HepG2 (cell line): ENCODE measurements at regions of chr13 and their contacts with region 1.

Region 1: DNA sequence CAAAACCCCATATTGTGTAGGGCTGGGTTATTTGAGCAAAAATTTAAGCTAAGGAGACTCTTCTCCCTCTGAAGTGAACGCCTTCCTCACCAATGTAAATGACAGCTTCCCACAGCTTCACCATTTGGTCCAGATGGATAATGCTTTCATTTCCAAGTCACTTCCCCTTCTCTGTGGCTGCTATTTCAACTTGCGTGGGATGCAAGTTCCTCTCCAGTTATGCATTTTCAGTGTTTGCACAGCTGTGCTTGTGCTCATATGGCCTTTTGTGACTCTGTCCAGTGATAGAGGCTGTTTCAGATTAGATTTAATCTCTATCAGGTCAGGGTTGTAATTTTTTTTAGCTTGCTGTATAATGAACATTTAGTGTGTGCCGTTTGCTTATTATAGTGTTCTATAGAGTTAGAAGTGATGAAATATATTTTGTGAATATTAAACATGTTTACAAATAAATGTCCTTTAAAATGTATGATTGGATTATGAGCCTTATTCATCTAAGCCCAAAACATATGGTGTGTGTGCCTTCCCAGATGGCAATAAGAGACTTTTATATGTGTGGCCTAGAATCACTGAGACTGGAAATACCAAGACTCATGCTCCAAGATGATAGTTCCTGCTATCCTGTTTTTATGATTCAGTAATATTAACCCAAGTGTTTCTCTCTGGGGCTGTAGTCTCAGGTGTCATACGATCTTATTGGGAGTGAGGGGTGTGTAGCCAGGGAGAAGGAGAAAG is 86.6 kb downstream of the TNFRSF19 start:
- DNase-seq: peak; percentile 45
- ATAC-seq: no peak
- H3K4me3 ChIP-seq: no peak overlapping the region
- H3K27ac ChIP-seq: no peak overlapping the region
- H3K4me1 ChIP-seq: peaks cover 67% of the 10 kb centered on the region
- H3K27me3 ChIP-seq: no peaks in the 10 kb centered on the region
- CTCF ChIP-seq: no peak
- EP300 ChIP-seq: no peak
- POLR2A ChIP-seq: no peak
- RAD21 ChIP-seq: no peak

Region 2: GRCh38 chr13:23129331-23129730 is 527.5 kb before region 1 on chr13:
- CTCF ChIA-PET with region 1: no interaction called
- POLR2A ChIA-PET with region 1: no interaction called
- in situ Hi-C with region 1: no loop called
- intact Hi-C with region 1: no loop called
- DNase-seq: no peak
- ATAC-seq: no peak
- H3K4me3 ChIP-seq: no peak overlapping the region
- H3K27ac ChIP-seq: no peak overlapping the region
- H3K4me1 ChIP-seq: no peaks in the 10 kb centered on the region
- H3K27me3 ChIP-seq: no peaks in the 10 kb centered on the region
- CTCF ChIP-seq: no peak
- EP300 ChIP-seq: no peak
- POLR2A ChIP-seq: no peak
- RAD21 ChIP-seq: no peak

Region 3: DNA sequence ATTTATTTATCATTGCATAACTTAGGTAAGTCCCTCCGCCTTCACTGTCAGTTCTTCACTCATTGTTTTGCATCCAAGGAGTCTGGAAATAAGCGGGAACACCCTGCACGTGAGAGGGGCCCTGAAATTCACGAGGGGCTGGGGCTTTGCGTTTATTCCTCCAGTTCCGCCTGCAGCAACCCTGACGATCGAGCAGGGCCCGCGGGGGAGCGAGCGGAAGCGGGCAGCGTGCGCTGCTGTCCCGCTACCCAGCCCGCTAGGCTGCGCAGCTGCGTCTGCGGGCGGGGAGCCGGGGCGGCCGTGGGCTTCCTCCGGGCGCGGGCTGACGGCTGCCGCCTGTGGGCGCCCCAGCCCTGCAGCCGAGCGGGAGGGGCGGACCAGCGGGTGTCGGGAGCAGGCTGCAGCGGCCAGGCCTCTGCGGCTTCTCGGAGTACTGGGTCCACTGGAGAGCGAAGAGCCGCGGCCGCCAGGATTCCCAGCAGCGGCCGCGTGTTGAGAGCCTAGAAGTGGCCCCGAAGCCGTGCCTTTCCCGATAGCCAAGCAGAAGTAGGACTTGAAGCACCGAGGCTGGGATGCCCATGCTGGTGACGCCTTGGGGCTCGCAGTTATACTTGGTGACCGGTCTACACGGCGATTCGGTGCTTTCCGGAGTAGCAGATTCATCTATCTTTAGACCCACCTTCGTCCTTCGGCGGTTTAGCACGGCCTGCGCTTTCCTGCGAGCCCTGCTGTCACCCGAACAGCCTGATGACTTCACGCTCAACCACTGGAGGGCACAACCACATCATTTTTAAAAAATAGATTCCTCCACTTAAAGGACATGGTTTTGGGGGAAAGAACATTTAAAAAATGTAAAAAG is 190.4 kb before region 1 on chr13:
- CTCF ChIA-PET with region 1: no interaction called
- POLR2A ChIA-PET with region 1: no interaction called
- in situ Hi-C with region 1: no loop called
- intact Hi-C with region 1: loop called (anchors 10 kb)
- DNase-seq: peak; percentile 54
- ATAC-seq: peak; percentile 97
- H3K4me3 ChIP-seq: peak overlapping the region; percentile 40 to 79 (median 50)
- H3K27ac ChIP-seq: no peak overlapping the region
- H3K4me1 ChIP-seq: peaks cover 25% of the 10 kb centered on the region
- H3K27me3 ChIP-seq: peaks cover 0 to 5% of the 10 kb centered on the region in 2 experiments; a peak in 2 of 5 replicates
- CTCF ChIP-seq: peak; percentile 68
- EP300 ChIP-seq: no peak
- POLR2A ChIP-seq: no peak
- RAD21 ChIP-seq: peak; percentile 65

Region 4: DNA sequence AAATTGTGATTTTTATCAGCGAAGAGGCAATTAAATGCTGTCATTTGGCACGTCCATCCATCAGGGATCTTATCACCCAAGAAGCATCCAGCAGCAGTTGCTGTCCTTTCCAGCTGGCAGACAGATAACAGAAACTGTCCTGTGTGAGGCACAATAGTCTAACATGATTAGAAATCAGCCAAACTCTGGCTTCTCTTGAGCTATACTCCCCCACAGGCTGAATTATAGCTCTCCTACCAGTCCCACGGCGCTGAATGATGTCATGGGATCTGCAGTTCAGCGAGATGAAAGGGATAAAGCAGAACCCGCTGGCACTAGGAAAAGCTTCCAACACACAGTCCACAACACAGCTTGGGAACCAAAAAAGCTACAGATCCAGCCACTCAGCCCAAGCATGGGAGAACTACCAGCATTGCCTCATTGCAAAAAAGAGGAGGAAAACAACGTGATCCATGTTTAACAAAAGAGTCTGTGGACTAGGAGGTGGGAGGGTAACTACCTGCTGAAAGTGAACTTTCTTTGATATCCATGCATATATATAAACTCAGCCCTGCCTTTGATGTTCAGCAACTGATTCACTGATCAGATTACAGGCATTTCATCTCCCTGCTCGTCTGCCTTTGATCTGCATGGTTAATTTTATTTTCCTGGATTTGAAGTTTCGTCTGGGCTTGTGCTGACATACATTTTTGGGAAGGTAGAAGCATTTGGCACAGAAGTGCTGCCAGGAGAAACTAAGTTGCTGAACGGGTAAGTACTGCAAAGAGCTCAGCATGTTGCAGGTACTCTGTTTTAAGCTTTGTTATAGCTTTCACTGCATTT is 86.5 kb before region 1 on chr13 and contains the start of gene TNFRSF19:
- CTCF ChIA-PET with region 1: no interaction called
- POLR2A ChIA-PET with region 1: interaction called, 17 read pairs
- in situ Hi-C with region 1: no loop called
- intact Hi-C with region 1: no loop called
- DNase-seq: peak; percentile 98
- ATAC-seq: peak; percentile 88
- H3K4me3 ChIP-seq: peak within 1 kb of the TSS; percentile 58 to 94 (median 66)
- H3K27ac ChIP-seq: peak within 1 kb of the TSS; percentile 84
- H3K4me1 ChIP-seq: peaks cover 64% of the 10 kb centered on the region
- H3K27me3 ChIP-seq: no peaks in the 10 kb centered on the region
- CTCF ChIP-seq: 0 out of 2 replicates have a peak, but pooled peaks have one; percentile 13
- EP300 ChIP-seq: peak; percentile 67 to 87; a peak in 3 of 4 replicates
- POLR2A ChIP-seq: peak in 1 of 2 experiments; percentile 63; a peak in 2 of 4 replicates
- RAD21 ChIP-seq: no peak
- total RNA-seq, gene TNFRSF19: 47.7 and 77.7 TPM in 2 replicates

Region 5: DNA sequence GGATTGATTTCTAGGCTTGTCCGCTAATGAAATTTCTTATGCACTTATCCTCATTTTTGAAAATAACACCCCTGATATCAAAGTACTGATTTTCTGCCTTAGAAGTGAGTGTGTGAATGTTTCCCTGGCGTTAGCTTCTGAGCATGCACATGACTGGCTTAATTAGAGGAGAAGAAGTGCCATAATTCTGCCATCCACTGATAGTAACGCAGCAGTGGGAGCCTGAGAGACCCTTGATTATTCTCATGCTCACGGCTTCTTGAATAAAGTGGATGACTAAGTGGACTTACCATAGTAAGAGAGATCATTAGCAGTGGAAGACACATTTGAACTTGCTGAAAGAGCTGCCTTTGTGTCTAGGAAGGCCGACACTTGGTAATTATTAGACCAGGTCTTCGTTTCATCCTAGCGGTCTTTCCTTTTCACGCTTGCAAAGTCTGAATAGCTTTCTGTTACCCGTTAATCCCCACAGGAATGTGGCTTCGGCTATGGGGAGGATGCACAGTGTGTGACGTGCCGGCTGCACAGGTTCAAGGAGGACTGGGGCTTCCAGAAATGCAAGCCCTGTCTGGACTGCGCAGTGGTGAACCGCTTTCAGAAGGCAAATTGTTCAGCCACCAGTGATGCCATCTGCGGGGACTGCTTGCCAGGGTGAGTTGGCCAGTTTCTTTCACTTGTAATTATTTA is 41.3 kb before region 1 on chr13:
- CTCF ChIA-PET with region 1: no interaction called
- POLR2A ChIA-PET with region 1: interaction called, 31 read pairs
- in situ Hi-C with region 1: no loop called
- intact Hi-C with region 1: loop called (anchors 5 kb)
- DNase-seq: peak; percentile 96
- ATAC-seq: peak; percentile 99
- H3K4me3 ChIP-seq: peak overlapping the region in 2 of 3 experiments; percentile 20 to 28; a peak in 3 of 6 replicates
- H3K27ac ChIP-seq: peak overlapping the region; percentile 86
- H3K4me1 ChIP-seq: peaks cover 100% of the 10 kb centered on the region
- H3K27me3 ChIP-seq: no peaks in the 10 kb centered on the region
- CTCF ChIP-seq: no peak
- EP300 ChIP-seq: peak; percentile 56 to 94; a peak in 3 of 4 replicates
- POLR2A ChIP-seq: no peak
- RAD21 ChIP-seq: 0 out of 2 replicates have a peak, but pooled peaks have one; percentile 29

Region 6: GRCh38 chr13:23630349-23631093 is 26.3 kb before region 1 on chr13:
- CTCF ChIA-PET with region 1: no interaction called
- POLR2A ChIA-PET with region 1: interaction called, 90 read pairs
- in situ Hi-C with region 1: no loop called
- intact Hi-C with region 1: loop called (anchors 1 kb)
- DNase-seq: peak; percentile 86
- ATAC-seq: peak; percentile 24
- H3K4me3 ChIP-seq: no peak overlapping the region
- H3K27ac ChIP-seq: peak overlapping the region; percentile 61
- H3K4me1 ChIP-seq: peaks cover 89% of the 10 kb centered on the region
- H3K27me3 ChIP-seq: no peaks in the 10 kb centered on the region
- CTCF ChIP-seq: no peak
- EP300 ChIP-seq: peak in 1 of 2 experiments; percentile 89; a peak in 2 of 4 replicates
- POLR2A ChIP-seq: no peak
- RAD21 ChIP-seq: no peak

Region 7: DNA sequence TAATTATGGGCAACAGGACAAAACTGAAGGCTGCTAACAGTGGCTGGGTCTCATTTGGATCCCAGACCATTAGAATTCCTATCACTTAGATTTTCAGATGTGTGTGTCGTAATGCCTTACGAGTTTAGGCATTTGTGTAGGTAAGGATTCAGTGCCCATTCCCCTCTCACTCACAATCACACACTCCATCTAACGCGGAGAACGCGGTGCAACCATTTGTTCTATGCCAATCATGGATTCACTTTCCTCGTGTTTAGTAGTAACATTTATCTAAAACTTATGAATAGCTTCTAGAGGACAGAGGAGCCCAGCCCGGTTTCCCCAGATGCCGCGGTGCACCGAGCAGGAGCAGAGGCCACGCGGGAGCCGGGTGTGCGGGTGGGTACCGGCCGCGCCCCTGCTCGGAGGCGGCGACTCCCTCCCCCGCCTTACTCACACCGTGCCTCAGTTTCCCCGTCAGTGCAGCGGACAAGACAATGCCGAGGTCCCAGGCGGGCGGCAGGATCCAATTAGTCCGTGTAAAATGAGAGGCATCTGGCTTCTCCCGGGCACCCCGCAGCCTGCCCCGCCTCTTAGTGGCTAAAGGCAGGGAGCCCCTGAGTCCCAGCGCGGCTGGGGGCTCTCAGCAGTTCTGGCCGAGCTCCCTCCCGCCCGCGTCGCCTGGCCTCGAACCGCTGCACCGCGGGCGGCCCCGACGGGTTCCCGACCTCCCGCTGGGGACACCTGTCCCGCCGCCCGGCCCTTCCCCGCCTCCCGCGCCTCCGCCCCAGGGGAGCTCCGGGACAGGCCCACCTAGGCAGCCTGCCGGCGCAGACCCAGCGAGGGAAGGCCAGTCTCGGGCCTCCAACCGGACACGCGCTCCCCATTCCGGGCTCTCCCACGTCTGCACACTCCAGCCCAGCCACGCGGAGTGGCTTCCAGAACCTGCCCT is 246.4 kb after region 1 on chr13:
- CTCF ChIA-PET with region 1: no interaction called
- POLR2A ChIA-PET with region 1: no interaction called
- in situ Hi-C with region 1: no loop called
- intact Hi-C with region 1: no loop called
- DNase-seq: no peak
- ATAC-seq: peak; percentile 38; the same call in 2 of the 3 replicates
- H3K4me3 ChIP-seq: no peak overlapping the region
- H3K27ac ChIP-seq: no peak overlapping the region
- H3K4me1 ChIP-seq: no peaks in the 10 kb centered on the region
- H3K27me3 ChIP-seq: peaks cover 3 to 19% of the 10 kb centered on the region in 2 experiments; a peak in 2 of 5 replicates
- CTCF ChIP-seq: no peak
- EP300 ChIP-seq: no peak
- POLR2A ChIP-seq: no peak
- RAD21 ChIP-seq: no peak